ENCODE measurements at regions of chr1 and their contacts with region 1.

Region 1: DNA sequence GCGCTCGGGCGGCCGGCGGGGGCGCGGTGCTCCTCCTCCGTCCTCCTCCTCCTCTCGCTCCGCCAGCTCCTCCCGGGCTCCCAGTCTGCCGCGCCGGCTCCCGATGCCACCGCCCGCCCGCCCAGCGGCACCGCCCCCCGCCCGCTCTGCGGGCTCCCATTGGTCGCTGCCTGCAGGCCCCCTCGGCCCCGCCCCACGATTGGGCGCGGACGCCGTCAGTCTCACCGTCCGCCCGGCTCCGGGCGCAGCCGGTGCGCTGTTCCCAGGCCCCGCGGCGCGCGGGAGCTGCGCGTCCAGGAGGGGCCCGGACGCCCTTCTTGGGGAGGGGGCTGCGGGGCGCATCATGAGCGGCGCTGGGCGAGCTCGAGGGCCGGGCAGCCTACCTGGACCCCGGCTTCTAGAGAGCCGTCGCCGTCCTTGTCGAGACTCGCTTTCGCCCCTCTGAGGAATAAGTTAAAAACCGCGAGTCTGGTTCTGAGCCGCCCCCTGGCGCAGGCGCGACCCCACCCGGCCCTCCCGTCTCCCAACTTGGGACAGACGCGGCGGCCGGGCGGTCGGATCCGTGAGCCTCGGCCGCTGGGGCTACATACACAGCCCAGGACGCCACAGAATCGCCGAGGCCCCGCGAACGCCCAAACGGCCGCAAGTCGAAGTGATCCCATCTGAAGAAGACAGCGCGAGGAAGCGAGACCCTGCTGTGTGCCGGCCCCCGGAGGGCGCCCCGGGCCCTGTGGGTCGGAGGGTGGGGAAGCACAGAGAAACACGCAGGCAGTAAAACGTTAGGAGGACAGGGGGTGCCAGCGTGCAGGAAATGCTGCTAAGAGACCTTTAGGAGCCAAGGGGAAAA is at the start of gene SIPA1L2:
- DNase-seq: peak; percentile 83
- ATAC-seq: peak; percentile 98
- H3K4me3 Mint-ChIP-seq: peak within 1 kb of the TSS; percentile 76
- H3K27ac Mint-ChIP-seq: no peak within 1 kb of the TSS
- H3K4me1 Mint-ChIP-seq: peaks cover 25% of the 10 kb centered on the region
- H3K27me3 Mint-ChIP-seq: peaks cover 29% of the 10 kb centered on the region
- CTCF ChIP-seq: peak; percentile 44
- total RNA-seq, gene SIPA1L2: 1.7 TPM

Region 2: GRCh38 chr1:231866392-231867331 is 763.6 kb before region 1 on chr1:
- CTCF ChIA-PET with region 1: interaction called, 10 read pairs
- POLR2A ChIA-PET with region 1: no interaction called
- intact Hi-C with region 1: loop called (anchors 10 kb)
- DNase-seq: peak; percentile 70
- ATAC-seq: peak; percentile 47
- H3K4me3 Mint-ChIP-seq: no peak overlapping the region
- H3K27ac Mint-ChIP-seq: no peak overlapping the region
- H3K4me1 Mint-ChIP-seq: peaks cover 22% of the 10 kb centered on the region
- H3K27me3 Mint-ChIP-seq: no peaks in the 10 kb centered on the region
- CTCF ChIP-seq: peak; percentile 96

Region 3: GRCh38 chr1:232599178-232600041 is 30.9 kb before region 1 on chr1:
- CTCF ChIA-PET with region 1: interaction called, 10 read pairs
- POLR2A ChIA-PET with region 1: no interaction called
- intact Hi-C with region 1: no loop called
- DNase-seq: no peak
- ATAC-seq: peak; percentile 51
- H3K4me3 Mint-ChIP-seq: no peak overlapping the region
- H3K27ac Mint-ChIP-seq: peak overlapping the region; percentile 47
- H3K4me1 Mint-ChIP-seq: peaks cover 24% of the 10 kb centered on the region
- H3K27me3 Mint-ChIP-seq: no peaks in the 10 kb centered on the region
- CTCF ChIP-seq: no peak

Region 4: GRCh38 chr1:232643251-232643650 is 13.0 kb after region 1 on chr1:
- CTCF ChIA-PET with region 1: no interaction called
- POLR2A ChIA-PET with region 1: no interaction called
- intact Hi-C with region 1: no loop called
- DNase-seq: no peak
- ATAC-seq: no peak
- H3K4me3 Mint-ChIP-seq: no peak overlapping the region
- H3K27ac Mint-ChIP-seq: no peak overlapping the region
- H3K4me1 Mint-ChIP-seq: no peaks in the 10 kb centered on the region
- H3K27me3 Mint-ChIP-seq: peaks cover 2% of the 10 kb centered on the region
- CTCF ChIP-seq: no peak

Region 5: GRCh38 chr1:232950197-232951176 is 320.2 kb after region 1 on chr1 and contains the start of gene NTPCR:
- CTCF ChIA-PET with region 1: interaction called, 3 read pairs
- POLR2A ChIA-PET with region 1: no interaction called
- intact Hi-C with region 1: loop called (anchors 10 kb)
- DNase-seq: peak; percentile 95
- ATAC-seq: peak; percentile 98
- H3K4me3 Mint-ChIP-seq: peak within 1 kb of the TSS; percentile 96
- H3K27ac Mint-ChIP-seq: peak within 1 kb of the TSS; percentile 95
- H3K4me1 Mint-ChIP-seq: peaks cover 37% of the 10 kb centered on the region
- H3K27me3 Mint-ChIP-seq: no peaks in the 10 kb centered on the region
- CTCF ChIP-seq: no peak
- total RNA-seq, gene NTPCR: 30.4 to 35.0 TPM